GM12878 (cell line): ENCODE measurements at regions of chr12 and their contacts with region 1.

Region 1: GRCh38 chr12:94875525-94875924 is 128.0 kb downstream of the NDUFA12 start:
- DNase-seq: peak; percentile 86
- ATAC-seq: peak; percentile 55
- H3K4me3 ChIP-seq: peak overlapping the region; percentile 91; the same call in 1 of the 2 replicates
- H3K27ac ChIP-seq: no peak overlapping the region
- H3K4me1 ChIP-seq: peaks cover 9% of the 10 kb centered on the region
- H3K27me3 ChIP-seq: no peaks in the 10 kb centered on the region
- CTCF ChIP-seq: peak; percentile 57 to 83 (median 68); a peak in 4 of 6 replicates
- EP300 ChIP-seq: no peak
- POLR2A ChIP-seq: no peak
- RAD21 ChIP-seq: peak; percentile 98

Region 2: GRCh38 chr12:94149119-94149780 is 726.3 kb before region 1 on chr12:
- CTCF ChIA-PET with region 1: interaction called, 8 read pairs
- POLR2A ChIA-PET with region 1: no interaction called
- RAD21 ChIA-PET with region 1: interaction called, 6 read pairs
- SMC1A ChIA-PET with region 1: interaction called, 5 read pairs
- in situ Hi-C with region 1: loop called (anchors 5 kb)
- intact Hi-C with region 1: loop called (anchors 5 kb)
- DNase-seq: no peak
- ATAC-seq: peak; percentile 50
- H3K4me3 ChIP-seq: peak overlapping the region; percentile 91
- H3K27ac ChIP-seq: peak overlapping the region; percentile 70
- H3K4me1 ChIP-seq: peaks cover 13% of the 10 kb centered on the region
- H3K27me3 ChIP-seq: no peaks in the 10 kb centered on the region
- CTCF ChIP-seq: peak; percentile 49 to 86 (median 70); a peak in 5 of 6 replicates
- EP300 ChIP-seq: no peak
- POLR2A ChIP-seq: peak; percentile 66
- RAD21 ChIP-seq: peak; percentile 60

Region 3: GRCh38 chr12:94560431-94561221 is 314.9 kb before region 1 on chr12:
- CTCF ChIA-PET with region 1: interaction called, 9 read pairs
- POLR2A ChIA-PET with region 1: interaction called, 4 read pairs
- RAD21 ChIA-PET with region 1: interaction called, 14 read pairs
- SMC1A ChIA-PET with region 1: interaction called, 10 read pairs
- in situ Hi-C with region 1: no loop called
- intact Hi-C with region 1: no loop called
- DNase-seq: peak; percentile 36
- ATAC-seq: peak; percentile 83
- H3K4me3 ChIP-seq: no peak overlapping the region
- H3K27ac ChIP-seq: peak overlapping the region; percentile 15; the same call in 1 of the 2 replicates
- H3K4me1 ChIP-seq: peaks cover 27% of the 10 kb centered on the region
- H3K27me3 ChIP-seq: no peaks in the 10 kb centered on the region
- CTCF ChIP-seq: no peak
- EP300 ChIP-seq: no peak; a peak in 1 of 4 replicates
- POLR2A ChIP-seq: peak; percentile 61
- RAD21 ChIP-seq: no peak

Region 4: DNA sequence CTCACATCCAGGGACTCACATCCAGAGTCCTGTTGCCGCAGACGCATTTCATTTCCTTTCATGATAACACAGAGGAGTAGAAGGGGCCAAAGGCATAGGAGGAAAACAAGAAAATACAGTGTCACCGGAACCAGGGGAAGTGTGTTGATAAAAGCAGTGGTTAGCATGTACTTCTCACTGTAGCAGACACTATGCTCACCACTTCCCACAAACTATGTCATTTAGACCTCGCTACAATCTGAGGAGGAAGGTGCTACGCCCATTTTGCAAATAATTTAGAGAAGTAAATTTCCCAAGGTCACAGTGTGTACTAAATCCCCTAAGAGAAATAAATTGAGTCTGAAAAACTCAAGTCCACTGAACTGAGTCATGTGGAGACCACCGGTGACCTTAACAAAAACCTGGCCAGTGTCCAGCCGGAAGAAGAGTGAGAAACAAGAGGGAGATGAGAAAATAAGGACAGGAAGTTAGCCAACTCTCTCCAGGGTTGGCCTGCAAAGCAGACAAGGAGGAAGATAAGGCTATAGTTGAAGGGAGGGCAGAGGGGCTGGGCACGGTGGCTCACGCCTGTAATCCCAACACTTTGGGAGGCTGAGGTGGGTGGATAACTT is 199.4 kb before region 1 on chr12:
- CTCF ChIA-PET with region 1: interaction called, 8 read pairs
- POLR2A ChIA-PET with region 1: no interaction called
- RAD21 ChIA-PET with region 1: interaction called, 7 read pairs
- SMC1A ChIA-PET with region 1: interaction called, 11 read pairs
- in situ Hi-C with region 1: no loop called
- intact Hi-C with region 1: no loop called
- DNase-seq: peak; percentile 65
- ATAC-seq: peak; percentile 84
- H3K4me3 ChIP-seq: no peak overlapping the region; the same call in 1 of the 2 replicates
- H3K27ac ChIP-seq: peak overlapping the region; percentile 76
- H3K4me1 ChIP-seq: peaks cover 27% of the 10 kb centered on the region
- H3K27me3 ChIP-seq: no peaks in the 10 kb centered on the region
- CTCF ChIP-seq: no peak
- EP300 ChIP-seq: peak; percentile 42 to 56; a peak in 2 of 4 replicates
- POLR2A ChIP-seq: no peak
- RAD21 ChIP-seq: no peak

Region 5: GRCh38 chr12:94762259-94762942 is 113.1 kb before region 1 on chr12:
- CTCF ChIA-PET with region 1: interaction called, 54 read pairs
- POLR2A ChIA-PET with region 1: interaction called, 4 read pairs
- RAD21 ChIA-PET with region 1: interaction called, 53 read pairs
- SMC1A ChIA-PET with region 1: interaction called, 65 read pairs
- in situ Hi-C with region 1: no loop called
- intact Hi-C with region 1: no loop called
- DNase-seq: peak; percentile 56
- ATAC-seq: peak; percentile 85
- H3K4me3 ChIP-seq: no peak overlapping the region
- H3K27ac ChIP-seq: peak overlapping the region; percentile 35
- H3K4me1 ChIP-seq: peaks cover 30% of the 10 kb centered on the region
- H3K27me3 ChIP-seq: no peaks in the 10 kb centered on the region
- CTCF ChIP-seq: no peak
- EP300 ChIP-seq: peak in 1 of 2 experiments; percentile 46; a peak in 1 of 4 replicates
- POLR2A ChIP-seq: no peak
- RAD21 ChIP-seq: no peak

Region 6: GRCh38 chr12:94813314-94813713 is 62.2 kb before region 1 on chr12:
- CTCF ChIA-PET with region 1: interaction called, 133 read pairs
- POLR2A ChIA-PET with region 1: interaction called, 96 read pairs
- RAD21 ChIA-PET with region 1: interaction called, 205 read pairs
- SMC1A ChIA-PET with region 1: interaction called, 243 read pairs
- in situ Hi-C with region 1: no loop called
- intact Hi-C with region 1: loop called (anchors 1 kb)
- DNase-seq: no peak
- ATAC-seq: no peak
- H3K4me3 ChIP-seq: peak overlapping the region; percentile 0; the same call in 1 of the 2 replicates
- H3K27ac ChIP-seq: peak overlapping the region; percentile 13; the same call in 1 of the 2 replicates
- H3K4me1 ChIP-seq: peaks cover 29% of the 10 kb centered on the region
- H3K27me3 ChIP-seq: no peaks in the 10 kb centered on the region
- CTCF ChIP-seq: no peak
- EP300 ChIP-seq: 0 out of 4 replicates have a peak, but pooled peaks of 1 of the 2 experiments have one; percentile 15
- POLR2A ChIP-seq: no peak
- RAD21 ChIP-seq: no peak

Region 7: GRCh38 chr12:95059984-95060383 is 184.5 kb after region 1 on chr12:
- CTCF ChIA-PET with region 1: no interaction called
- POLR2A ChIA-PET with region 1: no interaction called
- RAD21 ChIA-PET with region 1: no interaction called
- SMC1A ChIA-PET with region 1: no interaction called
- in situ Hi-C with region 1: no loop called
- intact Hi-C with region 1: no loop called
- DNase-seq: no peak
- ATAC-seq: no peak
- H3K4me3 ChIP-seq: no peak overlapping the region
- H3K27ac ChIP-seq: no peak overlapping the region
- H3K4me1 ChIP-seq: no peaks in the 10 kb centered on the region
- H3K27me3 ChIP-seq: no peaks in the 10 kb centered on the region
- CTCF ChIP-seq: no peak
- EP300 ChIP-seq: no peak
- POLR2A ChIP-seq: no peak
- RAD21 ChIP-seq: no peak

Region 8: DNA sequence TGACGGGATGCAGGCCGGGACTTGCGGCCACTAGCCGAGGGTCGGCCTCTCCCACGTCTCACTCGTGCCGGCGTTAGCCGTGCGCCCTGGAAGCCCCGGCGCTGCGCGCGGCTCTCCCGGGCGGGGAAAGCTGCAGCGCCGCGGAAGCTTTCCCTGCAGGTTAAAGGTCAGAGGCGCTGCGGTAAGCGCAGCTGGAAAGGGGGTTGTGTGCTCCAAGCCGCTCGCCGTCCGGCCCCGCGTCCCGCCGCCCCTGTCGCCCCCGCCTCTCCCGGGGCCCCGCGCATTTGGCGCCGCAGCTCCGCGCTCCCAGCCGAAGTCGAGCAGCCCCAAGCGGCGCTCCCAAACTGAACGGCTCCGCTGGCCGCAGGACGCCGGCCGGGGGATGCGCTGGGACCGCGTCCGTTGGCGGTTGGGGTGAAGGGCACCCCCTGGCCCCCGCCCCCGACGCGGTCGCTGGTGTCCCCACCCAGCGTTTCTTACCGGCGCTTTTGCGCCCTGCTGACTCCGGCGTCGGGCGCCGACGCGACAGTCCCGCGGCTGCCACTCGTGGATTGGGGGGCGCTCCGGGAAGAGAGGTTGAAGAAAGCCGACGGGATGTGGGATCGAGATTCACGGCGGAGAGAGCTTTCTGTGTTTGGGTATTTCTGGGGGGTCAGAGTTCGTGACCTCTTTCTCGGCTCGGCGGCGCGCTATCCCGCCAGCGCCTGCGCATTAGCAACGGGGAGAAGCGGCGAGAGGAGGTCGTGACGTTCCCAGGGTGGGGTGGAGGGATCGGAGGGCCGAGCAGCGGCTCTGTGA is 197.6 kb after region 1 on chr12 and contains the start of gene NR2C1:
- CTCF ChIA-PET with region 1: interaction called, 13 read pairs
- POLR2A ChIA-PET with region 1: interaction called, 3 read pairs
- RAD21 ChIA-PET with region 1: interaction called, 4 read pairs
- SMC1A ChIA-PET with region 1: interaction called, 6 read pairs
- in situ Hi-C with region 1: no loop called
- intact Hi-C with region 1: loop called (anchors 5 kb)
- DNase-seq: peak; percentile 63
- ATAC-seq: peak; percentile 98
- H3K4me3 ChIP-seq: peak within 1 kb of the TSS; percentile 88
- H3K27ac ChIP-seq: peak within 1 kb of the TSS; percentile 72
- H3K4me1 ChIP-seq: 0 out of 2 replicates have a peak, but pooled peaks cover 3% of the 10 kb centered on the region
- H3K27me3 ChIP-seq: no peaks in the 10 kb centered on the region
- CTCF ChIP-seq: no peak; a peak in 1 of 6 replicates
- EP300 ChIP-seq: no peak
- POLR2A ChIP-seq: peak; percentile 61
- RAD21 ChIP-seq: no peak
- polyA plus RNA-seq, gene NR2C1: 8.8 to 19.4 TPM